ENCODE measurements at regions of chr2 and their contacts with region 1.

Region 1: GRCh38 chr2:231706731-231707624 is 1.3 kb upstream of the PTMA start:
- DNase-seq: peak; percentile 97
- H3K4me3 Mint-ChIP-seq: peak overlapping the region; percentile 94
- H3K27ac Mint-ChIP-seq: peak overlapping the region; percentile 100
- H3K4me1 Mint-ChIP-seq: peaks cover 13% of the 10 kb centered on the region
- H3K27me3 Mint-ChIP-seq: no peaks in the 10 kb centered on the region

Region 2: DNA sequence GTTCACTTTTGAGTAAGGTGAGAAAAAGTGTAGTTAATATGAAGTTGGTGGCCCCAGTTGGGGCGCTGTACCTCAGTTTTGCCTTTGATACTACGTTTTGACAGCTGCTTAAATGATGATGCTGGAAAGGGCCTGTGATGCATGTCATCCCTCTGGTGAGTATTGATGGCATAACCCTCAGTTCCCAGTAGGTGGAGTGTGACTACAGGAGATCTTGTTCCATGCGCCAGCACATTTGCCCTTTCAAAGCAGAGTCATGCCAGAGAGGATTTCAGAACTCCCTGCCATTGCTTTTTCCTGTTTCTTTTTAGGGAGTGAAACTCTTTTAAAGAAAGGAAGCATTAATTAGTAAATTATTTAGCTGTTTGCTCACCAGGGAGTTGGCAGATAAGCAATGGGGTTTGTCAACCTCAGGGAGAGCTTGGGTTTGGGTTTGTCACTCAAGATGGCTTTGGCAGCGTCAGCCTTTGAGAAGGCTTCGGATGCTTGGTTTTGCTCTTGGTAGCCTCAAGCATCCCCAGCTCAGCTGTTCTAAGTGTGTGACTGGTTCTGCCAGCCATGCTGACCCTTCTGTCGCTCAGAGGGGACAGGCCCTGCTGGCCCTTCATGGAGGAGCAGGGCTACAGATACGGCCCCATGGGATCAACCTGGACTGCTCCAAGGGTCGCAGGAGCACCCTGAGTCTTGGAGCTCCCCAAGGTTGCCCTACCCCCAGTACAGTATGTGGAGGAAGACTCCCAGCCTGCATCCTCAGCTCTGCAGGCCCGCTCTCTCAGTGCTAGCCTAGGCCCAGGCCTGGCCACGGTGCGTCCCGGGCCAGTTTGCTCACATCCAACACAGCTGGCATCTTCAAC is 479.4 kb before region 1 on chr2:
- intact Hi-C with region 1: no loop called
- DNase-seq: peak; percentile 34
- H3K4me3 Mint-ChIP-seq: no peak overlapping the region
- H3K27ac Mint-ChIP-seq: no peak overlapping the region
- H3K4me1 Mint-ChIP-seq: no peaks in the 10 kb centered on the region
- H3K27me3 Mint-ChIP-seq: no peaks in the 10 kb centered on the region

Region 3: GRCh38 chr2:231463698-231464575 is 243.0 kb before region 1 on chr2 and contains the start of gene NCL:
- intact Hi-C with region 1: loop called (anchors 2 kb)
- DNase-seq: peak; percentile 83
- H3K4me3 Mint-ChIP-seq: peak within 1 kb of the TSS; percentile 94
- H3K27ac Mint-ChIP-seq: peak within 1 kb of the TSS; percentile 98
- H3K4me1 Mint-ChIP-seq: peaks cover 31% of the 10 kb centered on the region
- H3K27me3 Mint-ChIP-seq: no peaks in the 10 kb centered on the region
- total RNA-seq, gene NCL: 1,292 and 1,329 TPM in 2 replicates

Region 4: GRCh38 chr2:231662028-231662810 is 44.8 kb before region 1 on chr2:
- intact Hi-C with region 1: loop called (anchors 1 kb)
- DNase-seq: peak; percentile 98
- H3K4me3 Mint-ChIP-seq: peak overlapping the region; percentile 56
- H3K27ac Mint-ChIP-seq: peak overlapping the region; percentile 93
- H3K4me1 Mint-ChIP-seq: peaks cover 14% of the 10 kb centered on the region
- H3K27me3 Mint-ChIP-seq: no peaks in the 10 kb centered on the region

Region 5: DNA sequence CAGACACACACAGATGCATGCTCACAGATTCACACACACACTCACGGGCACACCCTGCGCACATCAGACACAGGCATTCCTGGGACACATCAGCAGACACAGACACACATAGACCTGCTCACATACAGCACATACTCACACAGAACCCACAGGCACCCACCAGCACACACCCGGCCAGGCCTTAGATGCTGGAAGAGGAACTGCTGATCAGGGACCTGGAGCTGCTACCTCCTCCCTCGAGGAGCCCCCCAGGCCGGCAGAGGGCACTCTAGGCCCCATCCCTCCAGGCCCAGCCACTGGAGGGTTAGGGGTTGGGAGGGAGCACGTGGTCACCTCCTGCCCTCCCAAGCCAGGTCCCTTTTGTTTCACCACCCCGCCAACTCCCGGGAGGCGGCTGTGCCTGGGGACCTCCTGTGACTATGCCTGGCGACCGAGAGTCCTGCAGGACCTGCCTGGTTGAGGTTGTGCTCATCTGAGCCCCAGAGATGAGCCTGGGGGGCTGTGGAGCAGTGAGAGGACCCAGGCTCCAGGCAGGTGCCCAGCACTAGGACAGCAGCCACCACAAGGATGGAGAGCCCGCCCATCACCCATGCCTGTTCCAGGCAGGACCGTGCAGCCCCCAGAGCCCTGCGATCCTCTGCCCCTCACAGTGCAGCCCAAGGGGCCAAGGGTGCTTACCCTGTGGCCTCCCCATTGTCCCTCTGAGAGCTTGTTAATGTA is 19.7 kb before region 1 on chr2:
- intact Hi-C with region 1: loop called (anchors 1 kb)
- DNase-seq: peak; percentile 31
- H3K4me3 Mint-ChIP-seq: no peak overlapping the region
- H3K27ac Mint-ChIP-seq: no peak overlapping the region
- H3K4me1 Mint-ChIP-seq: peaks cover 5% of the 10 kb centered on the region
- H3K27me3 Mint-ChIP-seq: peaks cover 1% of the 10 kb centered on the region

Region 6: GRCh38 chr2:231752061-231752460 is 45.1 kb after region 1 on chr2:
- intact Hi-C with region 1: no loop called
- DNase-seq: no peak
- H3K4me3 Mint-ChIP-seq: no peak overlapping the region
- H3K27ac Mint-ChIP-seq: no peak overlapping the region
- H3K4me1 Mint-ChIP-seq: no peaks in the 10 kb centered on the region
- H3K27me3 Mint-ChIP-seq: no peaks in the 10 kb centered on the region

Region 7: GRCh38 chr2:231786917-231787292 is 79.9 kb after region 1 on chr2:
- intact Hi-C with region 1: no loop called
- DNase-seq: no peak
- H3K4me3 Mint-ChIP-seq: peak overlapping the region; percentile 97
- H3K27ac Mint-ChIP-seq: peak overlapping the region; percentile 79
- H3K4me1 Mint-ChIP-seq: peaks cover 39% of the 10 kb centered on the region
- H3K27me3 Mint-ChIP-seq: no peaks in the 10 kb centered on the region

Measured in activated T-helper 2 cell treated with anti-CD3 and anti-CD28 coated beads, Interferon-gamma antibody, Interleukin-2, Interleukin-4, amounts not matched to agents 10 μg/mL and 5 μg/mL and 100 μg/mL, durations not matched to agents 14 hours and 24 hours and 36 hours (primary cell).